ENCODE measurements at regions of chr20 and their contacts with region 1.

Region 1: DNA sequence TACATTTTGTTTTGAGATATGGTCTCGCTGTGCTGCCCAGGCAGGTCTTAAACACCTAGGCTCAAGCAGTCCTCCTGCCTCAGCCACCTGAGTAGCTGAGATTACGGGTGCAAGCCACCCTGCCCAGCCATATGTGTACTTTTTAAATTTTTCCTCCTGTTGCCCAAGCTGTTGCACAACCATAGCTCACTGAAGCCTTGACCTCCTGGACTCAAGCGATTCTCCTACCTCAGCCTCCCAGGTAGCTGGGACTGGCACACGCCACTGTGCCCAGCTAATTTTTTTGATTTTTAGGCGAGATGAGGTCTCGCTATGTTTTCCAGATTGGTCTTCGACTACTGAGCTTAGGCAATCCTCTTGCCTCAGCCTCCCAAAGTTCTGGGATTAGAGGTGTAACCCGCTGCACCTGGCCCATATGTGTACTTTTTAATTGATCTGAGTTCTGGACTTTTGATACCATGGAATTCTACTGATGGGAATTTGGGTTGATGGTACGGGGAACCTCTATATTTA is 44.9 kb downstream of the ITCH start:
- DNase-seq: no peak
- H3K4me3 ChIP-seq: no peak overlapping the region
- CTCF ChIP-seq: no peak

Region 2: DNA sequence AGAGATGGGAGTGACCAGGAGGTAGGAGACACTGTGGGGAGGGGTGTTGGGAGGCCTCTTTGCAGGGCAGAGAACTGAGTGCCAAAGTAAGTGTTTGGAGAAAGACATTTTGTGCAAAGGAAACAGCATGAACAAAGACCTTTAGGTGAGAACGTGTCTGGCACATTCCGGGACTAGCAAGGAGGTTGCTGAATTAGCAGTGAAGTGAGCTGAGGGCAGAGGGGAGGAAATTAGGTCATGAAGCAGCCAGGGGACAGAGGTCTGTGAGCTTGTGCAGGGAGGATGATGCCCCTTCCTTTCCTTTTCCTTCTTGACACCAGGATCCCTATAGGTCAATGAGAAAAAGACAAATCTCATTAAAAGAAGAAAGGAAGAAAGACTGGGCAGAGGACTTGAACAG is 83.5 kb before region 1 on chr20:
- in situ Hi-C with region 1: no loop called
- DNase-seq: no peak
- H3K4me3 ChIP-seq: no peak overlapping the region
- CTCF ChIP-seq: no peak

Region 3: DNA sequence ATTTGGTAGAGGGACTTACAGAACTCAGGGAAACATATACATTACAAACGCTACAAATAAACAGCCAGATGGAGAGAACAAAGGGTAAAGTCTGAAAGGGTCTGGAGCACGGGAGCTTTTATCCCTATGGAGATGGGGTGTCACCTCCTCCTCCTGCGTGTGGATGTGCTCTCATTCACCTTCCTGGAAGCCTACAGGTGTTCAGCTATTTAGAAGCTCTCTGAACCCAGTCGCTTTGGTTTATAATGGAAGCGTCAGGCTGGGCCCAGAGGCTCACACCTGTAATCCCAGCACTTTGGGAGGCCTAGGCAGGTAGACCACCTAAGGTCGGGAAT is 62.6 kb before region 1 on chr20:
- in situ Hi-C with region 1: loop called (anchors 5 kb)
- DNase-seq: no peak
- H3K4me3 ChIP-seq: no peak overlapping the region
- CTCF ChIP-seq: no peak

Measured in astrocyte of the cerebellum (primary cell).